Activated CD4-positive, alpha-beta T cell treated with anti-CD3 and anti-CD28 coated beads, Interleukin-2, amount 10 ng/mL, durations not matched to agents 24 days and 14 days (primary cell): ENCODE measurements at regions of chr6 and their contacts with region 1.

Region 1: GRCh38 chr6:165439928-165440554 is 130.6 kb upstream of the C6orf118 start:
- DNase-seq: no peak
- H3K4me3 Mint-ChIP-seq: no peak overlapping the region
- H3K27ac Mint-ChIP-seq: no peak overlapping the region
- H3K4me1 Mint-ChIP-seq: no peaks in the 10 kb centered on the region
- H3K27me3 Mint-ChIP-seq: no peaks in the 10 kb centered on the region

Region 2: GRCh38 chr6:165850434-165851019 is 410.5 kb after region 1 on chr6:
- intact Hi-C with region 1: loop called (anchors 1 kb)
- DNase-seq: peak; percentile 87
- H3K4me3 Mint-ChIP-seq: no peak overlapping the region
- H3K27ac Mint-ChIP-seq: no peak overlapping the region
- H3K4me1 Mint-ChIP-seq: peaks cover 7% of the 10 kb centered on the region
- H3K27me3 Mint-ChIP-seq: peaks cover 57% of the 10 kb centered on the region

Region 3: DNA sequence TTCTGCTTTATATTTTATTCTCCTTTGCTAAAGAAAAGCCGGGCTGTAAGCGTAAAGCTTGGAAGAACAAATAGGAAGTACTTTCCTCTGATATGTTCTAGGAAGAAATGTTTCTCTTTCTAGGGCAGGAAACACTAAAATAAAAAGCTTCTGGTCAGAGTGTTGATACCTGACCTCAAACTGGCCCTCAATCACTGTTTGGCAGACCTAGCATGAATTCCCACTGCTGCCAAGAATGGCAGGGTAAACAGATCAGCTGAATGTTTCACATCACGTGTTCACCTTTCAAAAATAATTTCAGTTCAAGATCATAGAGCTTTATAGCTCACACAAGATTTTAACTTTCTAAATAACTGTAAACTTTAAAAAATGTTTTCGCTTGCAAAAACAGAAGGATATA is 939.8 kb after region 1 on chr6:
- intact Hi-C with region 1: no loop called
- DNase-seq: no peak
- H3K4me3 Mint-ChIP-seq: no peak overlapping the region
- H3K27ac Mint-ChIP-seq: no peak overlapping the region
- H3K4me1 Mint-ChIP-seq: peaks cover 13% of the 10 kb centered on the region
- H3K27me3 Mint-ChIP-seq: no peaks in the 10 kb centered on the region